Dorsolateral prefrontal cortex (tissue), 120 donors: ENCODE measurements at regions of chr12 and their contacts with region 1.

Region 1: DNA sequence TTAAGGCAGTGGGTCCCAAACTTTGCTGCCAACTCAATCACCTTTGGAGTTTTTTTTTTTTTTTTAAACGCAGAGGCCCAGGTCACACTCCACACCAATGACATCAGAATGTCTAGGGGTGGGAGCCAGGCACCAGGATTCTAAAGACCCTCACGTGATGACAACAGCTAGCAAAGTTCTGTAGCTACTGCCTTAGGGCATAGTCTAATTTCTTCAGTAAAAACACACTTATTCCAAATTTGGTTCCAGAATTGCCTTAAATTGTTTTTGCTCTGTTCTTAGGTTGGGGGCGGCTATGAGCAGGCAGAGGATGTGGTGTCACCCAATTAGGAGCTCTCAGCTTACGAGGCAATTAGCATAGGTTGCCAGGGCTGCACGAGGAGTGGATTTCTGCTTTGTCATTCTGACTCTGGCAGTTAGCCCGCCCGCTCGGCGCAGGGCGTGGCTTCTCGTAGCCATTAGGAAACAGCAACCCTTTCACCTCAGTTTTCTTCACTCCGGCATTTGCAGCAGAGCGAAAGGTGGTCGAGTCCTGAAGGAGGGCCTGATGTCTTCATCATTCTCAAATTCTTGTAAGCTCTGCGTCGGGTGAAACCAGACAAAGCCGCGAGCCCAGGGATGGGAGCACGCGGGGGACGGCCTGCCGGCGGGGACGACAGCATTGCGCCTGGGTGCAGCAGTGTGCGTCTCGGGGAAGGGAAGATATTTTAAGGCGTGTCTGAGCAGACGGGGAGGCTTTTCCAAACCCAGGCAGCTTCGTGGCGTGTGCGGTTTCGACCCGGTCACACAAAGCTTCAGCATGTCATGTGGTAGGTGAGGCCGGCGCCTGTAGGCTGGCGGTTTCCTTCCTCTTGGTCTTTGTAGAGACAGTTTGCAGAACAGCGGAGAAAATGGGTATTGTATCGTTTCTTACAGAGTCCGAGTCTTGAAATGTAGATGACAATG is 16.7 kb upstream of the EID3 start:
- DNase-seq: peak; percentile 76 to 90 (median 88)
- H3K4me3 ChIP-seq: peak overlapping the region; percentile 52 to 97 (median 81)
- H3K27ac ChIP-seq: peak overlapping the region; percentile 48 to 97 (median 91)
- H3K27me3 ChIP-seq: no peaks in the 10 kb centered on the region
- CTCF ChIP-seq: peak in 16 of 56 donors; percentile 4 to 39 (median 16)

Region 2: DNA sequence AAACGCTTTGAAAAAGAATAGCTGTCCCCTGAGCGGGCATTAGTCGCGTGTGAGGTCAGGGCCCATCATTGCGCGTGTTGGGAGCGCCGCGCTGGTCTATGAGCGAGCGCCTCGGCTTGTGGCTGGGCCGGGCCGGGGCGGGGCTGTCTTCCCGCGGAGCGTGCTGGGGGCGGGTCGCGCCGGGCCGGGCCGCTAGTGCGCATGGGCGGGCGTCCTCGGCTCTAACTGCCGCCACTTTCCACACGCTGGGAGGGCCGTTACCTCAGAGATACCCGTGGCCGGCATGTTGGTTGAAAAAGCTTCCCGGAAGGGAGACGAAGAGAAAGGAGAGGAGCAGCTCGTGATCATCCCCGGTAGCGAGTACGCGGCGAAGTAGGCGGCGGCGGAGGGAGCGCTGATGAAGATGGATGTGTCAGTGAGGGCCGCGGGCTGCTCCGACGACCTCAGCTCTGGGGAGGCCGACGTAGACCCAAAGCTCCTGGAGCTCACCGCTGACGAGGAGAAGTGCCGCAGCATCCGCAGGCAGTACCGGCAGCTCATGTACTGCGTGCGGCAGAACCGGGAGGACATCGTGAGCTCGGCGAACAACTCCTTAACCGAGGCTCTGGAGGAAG is 16.8 kb after region 1 on chr12 and contains the start of gene EID3:
- intact Hi-C with region 1: loop called in 1 of 2 experiments (anchors 1 kb)
- DNase-seq: peak; percentile 82 to 95 (median 86)
- H3K4me3 ChIP-seq: peak within 1 kb of the TSS; percentile 42 to 79 (median 66)
- H3K27ac ChIP-seq: peak within 1 kb of the TSS in 53 of 59 donors; percentile 3 to 86 (median 54)
- H3K27me3 ChIP-seq: no peaks in the 10 kb centered on the region
- CTCF ChIP-seq: peak in 26 of 56 donors; percentile 5 to 59 (median 29)
- total RNA-seq, gene EID3: 2.7 to 9.5 (median 5.7) TPM